Astrocyte of the cerebellum (primary cell): ENCODE measurements at regions of chr10 and their contacts with region 1.

Region 1: GRCh38 chr10:30529373-30529998 is 95.5 kb downstream of the MAP3K8 start:
- DNase-seq: no peak
- H3K4me3 ChIP-seq: no peak overlapping the region
- CTCF ChIP-seq: no peak

Region 2: GRCh38 chr10:30583778-30584415 is 54.4 kb after region 1 on chr10:
- in situ Hi-C with region 1: loop called (anchors 5 kb)
- DNase-seq: peak; percentile 65
- H3K4me3 ChIP-seq: peak overlapping the region; percentile 24
- CTCF ChIP-seq: no peak